Activated CD4-positive, alpha-beta memory T cell treated with anti-CD3 and anti-CD28 coated beads, Interleukin-2, amount 10 ng/mL, durations not matched to agents 7 days and 5 days (primary cell): ENCODE measurements at regions of chr19 and their contacts with region 1.

Region 1: GRCh38 chr19:23758187-23759074 is at the start of gene ZNF681:
- DNase-seq: peak; percentile 89
- H3K4me3 Mint-ChIP-seq: peak within 1 kb of the TSS; percentile 89
- H3K27ac Mint-ChIP-seq: peak within 1 kb of the TSS; percentile 90
- H3K4me1 Mint-ChIP-seq: peaks cover 24% of the 10 kb centered on the region
- H3K27me3 Mint-ChIP-seq: no peaks in the 10 kb centered on the region
- total RNA-seq, gene ZNF681: 3.7 to 5.9 TPM

Region 2: GRCh38 chr19:23273590-23274413 is 484.6 kb before region 1 on chr19:
- CTCF ChIA-PET with region 1: no interaction called
- POLR2A ChIA-PET with region 1: interaction called, 13 read pairs
- DNase-seq: peak; percentile 92
- H3K4me3 Mint-ChIP-seq: peak overlapping the region; percentile 96
- H3K27ac Mint-ChIP-seq: peak overlapping the region; percentile 92
- H3K4me1 Mint-ChIP-seq: peaks cover 21% of the 10 kb centered on the region
- H3K27me3 Mint-ChIP-seq: no peaks in the 10 kb centered on the region

Region 3: DNA sequence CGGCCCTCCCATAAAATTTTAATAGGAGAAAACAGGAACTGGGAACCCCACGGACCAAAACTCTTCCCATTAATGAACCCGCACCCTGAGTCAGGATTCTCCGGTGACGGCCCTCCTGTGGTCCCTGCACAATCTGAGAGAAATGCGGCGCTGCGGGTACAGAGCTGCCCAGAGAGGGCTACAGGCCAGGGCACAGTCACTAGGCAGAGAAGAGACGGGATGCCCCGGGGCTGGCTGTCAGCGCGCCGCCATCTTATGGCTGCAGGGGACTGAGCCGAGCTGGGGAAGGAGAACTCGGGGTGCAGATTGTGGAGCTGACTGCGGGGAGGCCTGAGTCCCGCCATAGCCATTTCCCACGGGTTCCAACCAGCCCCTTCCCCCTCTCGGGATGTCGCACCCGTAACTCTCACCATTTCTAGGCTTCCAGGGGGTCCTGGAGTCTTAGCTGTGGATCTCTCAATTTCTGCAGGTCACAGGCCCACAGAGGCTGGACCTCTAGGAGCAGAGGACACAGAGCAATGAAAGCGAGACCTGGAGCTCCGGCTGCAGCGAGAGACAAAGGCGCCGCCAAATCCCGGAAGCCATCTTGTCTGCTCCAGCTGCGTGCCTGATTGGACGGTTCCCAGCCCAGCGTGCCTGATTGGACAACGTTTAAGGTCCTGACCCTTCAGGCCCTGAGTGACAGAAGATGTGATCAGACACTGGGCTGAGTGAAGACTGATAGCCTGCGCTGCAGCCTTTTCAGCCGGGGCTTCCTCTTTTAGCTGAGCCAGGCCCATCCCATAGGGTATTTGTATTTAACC is 71.6 kb before region 1 on chr19 and contains the start of gene ZNF675:
- CTCF ChIA-PET with region 1: no interaction called
- POLR2A ChIA-PET with region 1: interaction called, 42 read pairs
- DNase-seq: peak; percentile 91
- H3K4me3 Mint-ChIP-seq: peak within 1 kb of the TSS; percentile 98
- H3K27ac Mint-ChIP-seq: peak within 1 kb of the TSS; percentile 96
- H3K4me1 Mint-ChIP-seq: peaks cover 18% of the 10 kb centered on the region
- H3K27me3 Mint-ChIP-seq: no peaks in the 10 kb centered on the region
- total RNA-seq, gene ZNF675: 18.1 to 19.9 TPM

Region 4: DNA sequence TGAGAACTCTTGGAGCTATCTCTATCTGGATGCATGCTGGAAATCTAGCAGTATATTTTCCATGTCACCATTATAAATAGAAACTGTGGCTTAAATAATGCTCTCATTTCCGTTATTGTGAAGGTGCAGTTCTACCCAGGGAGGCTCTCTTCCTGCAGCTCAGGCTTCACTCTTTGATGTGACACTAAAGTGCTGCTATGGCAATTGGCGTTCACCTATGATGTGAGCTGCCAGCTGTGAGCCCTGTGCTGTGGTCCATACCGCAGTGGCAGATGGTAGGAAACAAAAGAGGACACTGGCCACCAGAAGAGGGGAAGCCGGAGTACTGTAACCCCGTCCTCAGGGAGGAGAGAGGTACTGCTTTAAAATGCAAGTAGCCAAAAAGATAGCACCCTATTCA is 40.9 kb after region 1 on chr19:
- CTCF ChIA-PET with region 1: interaction called, 3 read pairs
- POLR2A ChIA-PET with region 1: interaction called, 13 read pairs
- DNase-seq: peak; percentile 36
- H3K4me3 Mint-ChIP-seq: peak overlapping the region; percentile 60
- H3K27ac Mint-ChIP-seq: peak overlapping the region; percentile 75
- H3K4me1 Mint-ChIP-seq: peaks cover 22% of the 10 kb centered on the region
- H3K27me3 Mint-ChIP-seq: no peaks in the 10 kb centered on the region

Region 5: DNA sequence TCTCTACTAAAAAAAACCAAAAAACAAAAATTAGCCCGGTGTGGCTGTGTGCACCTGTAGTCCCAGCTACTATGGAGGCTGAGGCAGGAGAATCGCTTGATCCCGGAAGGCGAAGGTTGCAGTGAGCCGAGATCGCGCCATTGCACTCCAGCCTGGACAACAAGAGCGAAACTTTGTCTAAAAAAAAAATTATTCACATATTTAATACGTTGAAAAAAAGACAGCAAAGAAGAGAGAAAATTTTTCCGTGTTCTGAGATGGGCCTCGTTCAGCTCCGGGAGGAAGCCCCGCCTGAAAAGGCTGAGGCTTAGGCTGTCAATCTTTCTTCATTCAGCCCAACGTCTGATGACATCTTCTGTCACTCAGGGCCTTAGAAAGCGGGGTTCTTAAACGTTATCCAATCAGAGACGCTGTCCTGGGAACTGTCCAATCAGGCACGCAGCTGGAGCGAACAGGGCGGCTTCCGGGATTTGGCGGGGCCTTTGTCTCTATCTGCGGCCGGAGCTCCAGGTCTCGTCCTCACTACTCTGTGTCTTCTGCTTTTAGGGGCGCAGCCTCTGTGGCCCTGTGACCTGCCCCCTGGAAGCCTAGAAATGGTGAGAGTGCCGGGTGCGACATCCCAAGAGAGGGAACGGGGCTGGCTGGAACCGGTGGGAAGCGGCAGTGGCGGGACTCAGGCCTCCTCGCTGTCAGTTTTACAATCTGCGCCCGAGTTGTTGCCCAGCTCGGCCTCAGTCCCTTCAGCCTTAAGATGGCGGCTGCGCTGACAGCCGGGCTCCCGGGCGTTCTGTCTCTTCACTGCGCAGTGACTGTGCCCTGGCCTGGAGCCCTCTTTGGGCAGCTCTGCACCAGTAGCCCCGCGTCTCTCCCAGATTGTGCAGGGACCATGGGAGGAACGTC is 156.2 kb after region 1 on chr19 and contains the start of gene ZNF726:
- CTCF ChIA-PET with region 1: interaction called, 4 read pairs
- POLR2A ChIA-PET with region 1: interaction called, 21 read pairs
- DNase-seq: peak; percentile 89
- H3K4me3 Mint-ChIP-seq: peak within 1 kb of the TSS; percentile 93
- H3K27ac Mint-ChIP-seq: peak within 1 kb of the TSS; percentile 89
- H3K4me1 Mint-ChIP-seq: peaks cover 16% of the 10 kb centered on the region
- H3K27me3 Mint-ChIP-seq: no peaks in the 10 kb centered on the region
- total RNA-seq, gene ZNF726: 8.7 to 9.7 TPM

Region 6: GRCh38 chr19:24033301-24033962 is 275.0 kb after region 1 on chr19:
- CTCF ChIA-PET with region 1: no interaction called
- POLR2A ChIA-PET with region 1: interaction called, 19 read pairs
- DNase-seq: peak; percentile 87
- H3K4me3 Mint-ChIP-seq: peak overlapping the region; percentile 99
- H3K27ac Mint-ChIP-seq: peak overlapping the region; percentile 97
- H3K4me1 Mint-ChIP-seq: peaks cover 25% of the 10 kb centered on the region
- H3K27me3 Mint-ChIP-seq: no peaks in the 10 kb centered on the region

Region 7: DNA sequence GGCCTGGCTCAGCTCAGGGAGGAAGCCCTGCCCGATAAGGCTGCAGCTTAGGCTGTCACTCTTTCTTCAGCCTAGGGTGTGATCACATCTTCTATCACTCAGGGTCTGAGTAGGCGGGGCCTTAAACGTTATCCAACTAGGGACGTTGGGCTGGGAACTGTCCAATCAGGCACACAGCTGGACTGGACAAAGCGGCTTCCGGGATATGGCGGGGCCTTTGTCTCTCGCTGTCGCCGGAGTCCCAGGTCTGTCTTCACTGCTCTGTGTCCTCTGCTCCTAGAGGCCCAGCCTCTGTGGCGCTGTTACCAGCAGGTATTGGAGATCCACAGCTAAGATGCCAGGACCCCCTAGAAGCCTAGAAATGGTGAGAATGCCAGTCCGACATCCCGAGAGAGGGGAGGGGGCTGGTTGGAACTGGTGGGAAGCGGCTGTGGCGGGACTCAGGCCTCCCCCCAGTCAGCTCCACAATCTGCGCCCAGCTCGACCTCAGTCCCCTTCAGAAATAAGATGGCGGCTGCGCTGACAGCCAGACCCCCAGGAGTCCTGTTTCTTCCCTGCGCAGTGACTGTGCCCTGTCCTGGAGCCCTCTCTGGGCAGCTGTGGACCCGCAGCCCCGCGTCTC is 328.7 kb after region 1 on chr19 and contains the start of gene ZNF254:
- CTCF ChIA-PET with region 1: no interaction called
- POLR2A ChIA-PET with region 1: interaction called, 13 read pairs
- DNase-seq: peak; percentile 85
- H3K4me3 Mint-ChIP-seq: peak within 1 kb of the TSS; percentile 93
- H3K27ac Mint-ChIP-seq: peak within 1 kb of the TSS; percentile 92
- H3K4me1 Mint-ChIP-seq: peaks cover 11% of the 10 kb centered on the region
- H3K27me3 Mint-ChIP-seq: no peaks in the 10 kb centered on the region
- total RNA-seq, gene ZNF254: 9.9 to 10.2 TPM